AG04450 (cell line): ENCODE measurements at regions of chr11 and their contacts with region 1.

Region 1: DNA sequence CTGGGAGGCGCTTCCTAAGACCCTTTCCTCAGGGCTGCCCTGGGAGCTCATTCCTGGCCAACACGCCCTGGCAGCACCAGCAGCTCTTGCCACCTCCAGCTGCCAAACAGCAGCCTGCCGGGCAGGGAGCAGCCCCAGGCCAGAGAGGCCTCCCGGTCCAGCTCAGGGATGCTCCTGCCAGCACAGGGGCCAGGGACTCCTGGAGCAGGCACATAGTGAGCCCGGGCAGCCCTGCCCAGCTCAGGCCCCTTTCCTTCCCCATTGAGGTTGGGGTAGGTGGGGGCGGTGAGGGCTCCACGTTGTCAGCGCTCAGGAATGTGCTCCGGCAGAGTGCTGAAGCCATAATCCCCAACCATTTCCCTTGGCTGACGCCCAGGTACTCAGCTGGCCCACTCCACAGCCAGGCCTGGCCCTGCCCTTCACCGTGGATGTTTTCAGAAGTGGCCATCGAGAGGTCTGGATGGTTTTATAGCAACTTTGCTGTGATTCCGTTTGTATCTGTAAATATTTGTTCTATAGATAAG is 7.6 kb downstream of the SLC39A13 start:
- DNase-seq: peak; percentile 91
- H3K4me3 ChIP-seq: 0 out of 2 replicates have a peak overlapping the region, but pooled peaks have one; percentile 13
- H3K27ac ChIP-seq: peak overlapping the region; percentile 97
- H3K27me3 ChIP-seq: no peaks in the 10 kb centered on the region
- CTCF ChIP-seq: no peak

Region 2: DNA sequence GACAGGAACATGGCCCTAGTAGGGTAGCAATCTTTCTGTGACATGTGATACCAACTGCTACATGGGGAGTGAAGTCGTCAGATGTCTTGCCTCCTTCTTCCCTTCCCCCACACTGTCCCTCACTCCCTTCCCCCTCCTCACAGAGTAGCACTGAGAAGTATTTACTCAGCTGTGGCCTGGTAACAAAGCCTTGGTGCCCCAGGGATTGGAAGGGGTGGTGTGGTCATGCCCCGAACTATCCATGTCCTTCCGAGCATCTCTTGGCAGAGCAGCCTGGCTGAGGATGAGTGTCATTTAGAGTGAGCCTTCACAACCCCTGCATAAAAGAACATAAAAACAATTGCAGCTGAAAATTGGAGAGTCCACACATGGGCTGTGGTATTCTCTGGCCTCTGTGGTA is 285.5 kb before region 1 on chr11:
- CTCF ChIA-PET with region 1: no interaction called
- POLR2A ChIA-PET with region 1: no interaction called
- DNase-seq: no peak
- H3K4me3 ChIP-seq: no peak overlapping the region
- H3K27ac ChIP-seq: no peak overlapping the region
- H3K27me3 ChIP-seq: no peaks in the 10 kb centered on the region
- CTCF ChIP-seq: no peak

Region 3: DNA sequence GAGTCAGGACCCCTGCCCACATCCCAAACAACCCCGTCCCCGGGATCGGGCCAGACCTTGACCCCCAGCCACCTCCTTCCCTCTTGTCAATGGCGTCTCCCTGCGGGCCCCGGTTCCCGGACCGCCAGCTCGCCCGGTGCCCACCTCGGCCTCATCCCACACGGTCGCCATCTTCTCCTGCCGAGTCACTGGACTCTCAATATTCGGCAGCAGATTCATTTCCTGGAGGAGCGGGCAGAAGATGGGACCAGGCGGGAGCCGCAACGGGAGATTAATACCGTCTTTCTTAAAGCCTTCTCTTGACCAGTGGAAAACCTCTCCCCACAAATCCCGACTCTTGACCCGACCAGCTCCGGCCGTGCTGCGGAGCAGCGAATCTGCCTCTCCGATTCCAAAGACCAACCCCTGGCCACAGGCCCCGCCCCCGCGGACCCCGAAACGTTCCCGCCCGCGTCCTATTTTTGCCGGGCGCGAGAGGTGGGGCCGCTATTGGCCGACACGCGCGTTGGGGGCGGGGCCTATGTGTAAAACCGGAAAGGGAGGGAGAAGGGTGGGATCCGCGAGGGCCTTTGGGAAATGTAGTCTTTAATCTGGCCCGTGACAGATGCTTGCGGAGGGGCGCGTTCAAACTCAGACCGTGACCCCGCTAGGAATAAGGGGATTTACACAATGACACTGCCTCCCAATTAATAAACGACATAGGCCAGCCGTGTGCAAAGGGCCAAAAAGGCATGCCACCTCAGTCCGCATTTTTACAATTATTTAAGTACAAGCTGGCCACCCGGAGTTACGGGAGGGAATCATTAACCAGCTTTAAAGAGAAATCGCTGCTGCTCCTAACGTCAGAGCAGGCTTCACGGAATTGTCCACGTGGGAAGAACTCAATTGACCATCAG is 10.3 kb after region 1 on chr11 and contains the start of gene PSMC3:
- CTCF ChIA-PET with region 1: interaction called, 7 read pairs
- POLR2A ChIA-PET with region 1: interaction called, 22 read pairs
- DNase-seq: peak; percentile 87
- H3K4me3 ChIP-seq: peak within 1 kb of the TSS; percentile 94
- H3K27ac ChIP-seq: peak within 1 kb of the TSS; percentile 89
- H3K27me3 ChIP-seq: no peaks in the 10 kb centered on the region
- CTCF ChIP-seq: no peak
- polyA plus RNA-seq, gene PSMC3: 211 and 290 TPM in 2 replicates